A673 (cell line): ENCODE measurements at regions of chr21 and their contacts with region 1.

Region 1: DNA sequence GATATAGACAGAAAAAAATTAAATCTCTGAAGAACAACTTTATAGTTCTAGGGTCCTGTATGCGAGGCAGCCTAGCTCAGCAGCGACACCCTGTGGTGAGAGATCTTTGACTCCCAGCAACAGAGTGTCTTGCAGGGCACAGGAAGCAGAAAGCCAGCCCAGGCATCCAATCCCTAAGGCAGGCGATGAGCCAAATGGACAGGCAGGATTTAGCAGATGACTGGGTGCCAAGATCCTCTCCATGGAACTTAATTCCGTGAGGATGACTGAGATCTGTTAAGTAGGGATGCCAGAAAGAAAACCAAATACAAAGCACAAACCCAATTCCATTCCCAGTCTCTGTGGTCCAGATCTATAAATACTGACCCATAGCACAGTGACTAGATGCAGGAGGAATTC is 38.8 kb downstream of the HLCS start:
- DNase-seq: peak; percentile 91
- H3K4me3 ChIP-seq: no peak overlapping the region
- H3K27ac ChIP-seq: no peak overlapping the region
- H3K4me1 ChIP-seq: peaks cover 29% of the 10 kb centered on the region
- H3K27me3 ChIP-seq: no peaks in the 10 kb centered on the region
- CTCF ChIP-seq: peak; percentile 97

Region 2: DNA sequence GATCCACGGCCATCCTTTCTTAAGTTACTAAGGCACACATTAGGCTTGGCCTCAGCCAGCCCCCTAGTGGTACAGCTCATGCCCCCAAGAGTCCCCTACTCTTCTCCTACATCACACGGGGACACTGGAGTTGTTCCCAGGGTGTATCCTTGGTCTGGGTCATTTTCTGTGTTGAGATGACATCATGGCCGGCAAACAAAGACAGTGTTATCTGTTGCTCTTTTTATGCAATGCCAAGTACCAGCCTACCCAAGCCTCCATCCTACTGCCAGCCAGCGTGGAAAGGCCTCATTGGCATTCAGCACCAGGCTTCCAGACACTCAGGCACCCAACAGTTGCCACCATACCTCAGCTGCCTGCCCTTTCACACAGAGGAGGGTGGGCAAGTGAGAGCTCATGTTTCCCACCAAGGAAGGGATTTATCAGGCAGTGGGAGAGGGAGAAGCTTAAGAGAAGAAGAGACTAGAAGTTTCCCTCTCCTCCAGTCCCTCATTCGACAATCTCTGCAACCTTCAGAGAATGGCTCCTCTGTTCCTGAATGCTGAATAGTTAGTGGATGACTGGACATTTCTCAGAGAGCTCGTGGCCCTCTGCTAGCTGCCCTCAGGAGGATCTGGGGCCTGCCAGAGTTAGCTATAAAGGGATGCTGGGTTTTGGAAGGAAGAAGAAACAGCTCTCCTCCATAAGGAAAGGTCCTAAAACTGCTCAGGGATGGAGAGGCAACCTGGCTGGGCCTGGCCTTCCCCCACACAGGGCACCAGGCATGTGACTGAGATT is 840.2 kb before region 1 on chr21:
- CTCF ChIA-PET with region 1: no interaction called
- POLR2A ChIA-PET with region 1: no interaction called
- intact Hi-C with region 1: no loop called
- DNase-seq: no peak
- H3K4me3 ChIP-seq: no peak overlapping the region
- H3K27ac ChIP-seq: no peak overlapping the region
- H3K4me1 ChIP-seq: no peaks in the 10 kb centered on the region
- H3K27me3 ChIP-seq: no peaks in the 10 kb centered on the region
- CTCF ChIP-seq: peak; percentile 40

Region 3: DNA sequence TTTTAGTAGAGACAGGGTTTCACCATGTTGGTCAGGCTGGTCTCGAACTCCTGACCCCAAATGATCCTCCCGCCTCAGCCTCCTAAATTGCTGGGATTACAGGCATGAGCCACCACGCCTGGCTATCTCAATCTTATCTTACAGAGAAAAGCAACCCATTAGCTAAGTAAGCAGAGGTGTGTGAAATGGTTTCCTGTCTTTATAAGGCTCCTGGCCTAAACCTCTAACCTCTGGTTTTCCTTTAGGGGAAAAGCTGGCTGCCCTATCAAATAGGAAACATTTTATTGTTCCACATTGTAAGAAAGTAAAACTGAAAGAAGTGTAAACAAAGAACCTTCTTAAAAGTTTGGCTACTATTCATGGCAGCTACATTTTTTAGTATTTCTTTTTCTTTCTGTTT is 686.0 kb before region 1 on chr21:
- CTCF ChIA-PET with region 1: interaction called, 12 read pairs
- POLR2A ChIA-PET with region 1: no interaction called
- intact Hi-C with region 1: no loop called
- DNase-seq: no peak
- H3K4me3 ChIP-seq: no peak overlapping the region
- H3K27ac ChIP-seq: no peak overlapping the region
- H3K4me1 ChIP-seq: no peaks in the 10 kb centered on the region
- H3K27me3 ChIP-seq: no peaks in the 10 kb centered on the region
- CTCF ChIP-seq: no peak

Region 4: GRCh38 chr21:36385233-36386030 is 542.3 kb before region 1 on chr21 and contains the start of gene CHAF1B:
- CTCF ChIA-PET with region 1: no interaction called
- POLR2A ChIA-PET with region 1: no interaction called
- intact Hi-C with region 1: no loop called
- DNase-seq: peak; percentile 81
- H3K4me3 ChIP-seq: peak within 1 kb of the TSS; percentile 70
- H3K27ac ChIP-seq: peak within 1 kb of the TSS; percentile 80
- H3K4me1 ChIP-seq: peaks cover 24% of the 10 kb centered on the region
- H3K27me3 ChIP-seq: no peaks in the 10 kb centered on the region
- CTCF ChIP-seq: no peak
- total RNA-seq, gene CHAF1B: 52.7 and 53.4 TPM in 2 replicates

Region 5: DNA sequence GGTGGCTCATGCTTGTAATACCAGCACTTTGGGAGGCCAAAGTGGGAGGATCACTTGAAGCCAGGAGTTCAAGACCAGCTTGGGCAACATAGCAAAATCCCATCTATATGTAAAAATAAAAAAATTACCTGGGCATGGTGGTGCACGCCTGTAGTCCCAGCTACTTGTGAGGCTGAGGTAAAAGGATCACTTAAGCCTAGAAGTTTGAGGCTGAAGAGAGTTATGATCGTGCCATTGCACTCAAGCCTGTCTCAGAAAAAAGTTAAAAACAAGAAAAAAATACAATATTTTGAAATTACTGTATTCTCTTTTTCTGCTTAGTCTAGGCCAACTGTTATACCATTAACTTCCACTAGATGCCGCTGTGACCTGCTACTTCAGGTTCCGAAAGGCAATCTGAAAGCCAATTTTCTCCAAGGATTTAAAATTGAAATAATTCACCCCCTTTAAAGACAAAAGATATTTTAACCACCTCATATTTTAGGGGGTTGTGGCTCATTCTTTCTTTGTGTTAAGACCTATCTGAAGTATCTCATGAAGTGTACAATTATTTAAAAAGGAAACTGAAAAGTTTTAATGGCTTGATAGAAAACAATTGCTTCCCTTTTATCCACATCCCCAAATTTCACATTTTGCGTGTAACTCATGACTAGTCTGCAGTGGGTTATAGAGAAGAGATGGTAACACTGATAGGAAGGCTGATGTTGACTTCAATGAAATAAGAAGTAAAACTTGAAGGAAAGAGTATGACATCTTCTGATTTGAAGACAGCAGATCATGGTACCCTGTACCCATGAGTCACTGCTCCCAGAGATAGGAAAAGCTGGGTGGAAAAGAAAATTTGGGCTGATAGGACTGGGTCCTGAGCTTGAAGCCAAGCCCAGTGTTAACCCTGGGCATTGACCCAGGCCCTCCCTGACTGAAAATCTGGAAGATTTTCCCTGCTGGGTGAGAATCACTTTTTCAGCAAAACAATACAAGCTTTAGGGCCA is 423.4 kb before region 1 on chr21:
- CTCF ChIA-PET with region 1: interaction called, 3 read pairs
- POLR2A ChIA-PET with region 1: no interaction called
- intact Hi-C with region 1: loop called (anchors 1 kb)
- DNase-seq: peak; percentile 72
- H3K4me3 ChIP-seq: no peak overlapping the region
- H3K27ac ChIP-seq: peak overlapping the region; percentile 29
- H3K4me1 ChIP-seq: peaks cover 37% of the 10 kb centered on the region
- H3K27me3 ChIP-seq: no peaks in the 10 kb centered on the region
- CTCF ChIP-seq: peak; percentile 86

Region 6: GRCh38 chr21:36698981-36699891 is 228.5 kb before region 1 on chr21 and contains the start of gene SIM2:
- CTCF ChIA-PET with region 1: no interaction called
- POLR2A ChIA-PET with region 1: no interaction called
- intact Hi-C with region 1: loop called (anchors 5 kb)
- DNase-seq: peak; percentile 64
- H3K4me3 ChIP-seq: peak within 1 kb of the TSS; percentile 97
- H3K27ac ChIP-seq: peak within 1 kb of the TSS; percentile 92
- H3K4me1 ChIP-seq: peaks cover 4% of the 10 kb centered on the region
- H3K27me3 ChIP-seq: peaks cover 6% of the 10 kb centered on the region
- CTCF ChIP-seq: no peak
- total RNA-seq, gene SIM2: 42.7 and 49.1 TPM in 2 replicates

Region 7: GRCh38 chr21:37009740-37010341 is 82.1 kb after region 1 on chr21:
- CTCF ChIA-PET with region 1: interaction called, 10 read pairs
- POLR2A ChIA-PET with region 1: no interaction called
- intact Hi-C with region 1: no loop called
- DNase-seq: peak; percentile 94
- H3K4me3 ChIP-seq: peak overlapping the region; percentile 43
- H3K27ac ChIP-seq: peak overlapping the region; percentile 9
- H3K4me1 ChIP-seq: peaks cover 5% of the 10 kb centered on the region
- H3K27me3 ChIP-seq: no peaks in the 10 kb centered on the region
- CTCF ChIP-seq: peak; percentile 93